ENCODE measurements at regions of chr20 and their contacts with region 1.

Region 1: GRCh38 chr20:33561692-33562601 is 72.1 kb downstream of the CBFA2T2 start:
- DNase-seq: no peak
- H3K4me3 ChIP-seq: no peak overlapping the region
- H3K27ac ChIP-seq: no peak overlapping the region
- H3K4me1 ChIP-seq: no peaks in the 10 kb centered on the region
- H3K27me3 ChIP-seq: peaks cover 0 to 7% (median 6%) of the 10 kb centered on the region in 4 experiments; a peak in 3 of 7 replicates
- CTCF ChIP-seq: no peak
- EP300 ChIP-seq: no peak
- POLR2A ChIP-seq: no peak
- RAD21 ChIP-seq: no peak

Region 2: GRCh38 chr20:33576432-33577125 is 14.6 kb after region 1 on chr20:
- CTCF ChIA-PET with region 1: interaction called, 14 read pairs
- POLR2A ChIA-PET with region 1: interaction called, 4 read pairs
- DNase-seq: no peak
- H3K4me3 ChIP-seq: no peak overlapping the region
- H3K27ac ChIP-seq: no peak overlapping the region
- H3K4me1 ChIP-seq: peaks cover 0 to 6% (median 0%) of the 10 kb centered on the region in 4 experiments; a peak in 1 of 7 replicates
- H3K27me3 ChIP-seq: no peaks in the 10 kb centered on the region
- CTCF ChIP-seq: peak; percentile 27 to 53 (median 31); a peak in 3 of 4 replicates
- EP300 ChIP-seq: no peak
- POLR2A ChIP-seq: no peak
- RAD21 ChIP-seq: peak in 1 of 2 experiments; percentile 5; a peak in 1 of 4 replicates

Measured in H1 (cell line).